ENCODE measurements at regions of chr1 and their contacts with region 1.

Region 1: GRCh38 chr1:166969074-166969677 is 6.2 kb downstream of the ILDR2 start:
- DNase-seq: no peak
- H3K4me3 Mint-ChIP-seq: no peak overlapping the region
- H3K27ac Mint-ChIP-seq: no peak overlapping the region
- H3K4me1 Mint-ChIP-seq: no peaks in the 10 kb centered on the region
- H3K27me3 Mint-ChIP-seq: peaks cover 81% of the 10 kb centered on the region
- CTCF ChIP-seq: no peak

Region 2: DNA sequence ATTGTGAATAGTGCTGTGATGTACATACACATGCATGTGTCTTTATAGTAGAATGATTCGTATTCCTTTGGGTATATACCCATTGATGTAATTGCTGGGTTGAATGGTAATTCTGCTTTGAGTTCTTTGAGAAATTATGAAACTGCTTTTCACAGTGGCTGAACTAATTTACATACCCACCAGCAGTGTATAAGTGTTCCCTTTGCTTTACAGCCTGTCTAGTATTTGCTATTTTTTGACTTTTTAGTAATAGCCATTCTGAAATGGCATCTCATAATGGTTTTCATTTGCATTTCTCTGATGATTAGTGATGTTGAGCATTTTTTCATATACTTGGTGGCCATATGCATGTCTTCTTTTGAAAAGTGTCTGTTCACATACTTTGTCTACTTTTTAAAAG is 747.9 kb before region 1 on chr1:
- CTCF ChIA-PET with region 1: no interaction called
- intact Hi-C with region 1: no loop called
- DNase-seq: no peak
- H3K4me3 Mint-ChIP-seq: no peak overlapping the region
- H3K27ac Mint-ChIP-seq: no peak overlapping the region
- H3K4me1 Mint-ChIP-seq: no peaks in the 10 kb centered on the region
- H3K27me3 Mint-ChIP-seq: no peaks in the 10 kb centered on the region
- CTCF ChIP-seq: no peak

Region 3: DNA sequence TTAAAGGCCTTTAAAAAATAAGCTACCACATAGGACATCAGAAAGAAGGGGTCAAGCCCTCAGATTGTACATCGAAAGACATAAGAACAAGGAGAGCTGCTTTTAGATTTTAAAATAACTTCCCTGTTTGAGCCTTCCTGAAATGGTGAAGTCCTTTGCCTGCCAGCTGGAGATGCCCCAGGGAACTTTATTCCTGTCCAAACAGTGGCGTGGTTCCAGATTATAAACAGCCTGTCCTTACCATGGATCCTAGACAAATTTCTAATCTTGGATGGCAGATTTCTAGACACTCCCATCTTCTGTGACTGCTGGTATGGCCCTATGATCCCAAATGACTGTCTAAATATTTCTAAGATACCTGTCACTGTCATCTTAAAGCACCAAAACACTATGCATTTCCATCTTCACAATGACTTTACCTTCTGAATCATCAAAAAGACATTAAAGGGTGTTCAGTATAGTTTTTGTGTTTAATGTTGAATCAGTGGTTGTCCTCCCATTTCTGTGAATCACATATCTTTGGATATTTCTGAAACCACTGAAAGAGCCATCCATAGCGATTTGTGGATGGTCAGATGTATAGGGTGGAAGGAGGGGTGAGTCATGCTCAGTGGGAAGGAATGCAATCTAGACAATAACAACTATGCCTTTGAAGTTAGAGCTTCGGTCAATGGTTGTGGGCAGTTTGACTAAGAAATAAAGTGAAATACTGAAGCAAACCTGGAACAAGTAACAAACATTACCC is 17.0 kb before region 1 on chr1:
- CTCF ChIA-PET with region 1: no interaction called
- intact Hi-C with region 1: loop called (anchors 2 kb)
- DNase-seq: no peak
- H3K4me3 Mint-ChIP-seq: no peak overlapping the region
- H3K27ac Mint-ChIP-seq: no peak overlapping the region
- H3K4me1 Mint-ChIP-seq: no peaks in the 10 kb centered on the region
- H3K27me3 Mint-ChIP-seq: peaks cover 79% of the 10 kb centered on the region
- CTCF ChIP-seq: no peak